ENCODE measurements at regions of chr12 and their contacts with region 1.

Region 1: GRCh38 chr12:117119592-117120198 is 20.5 kb upstream of the TESC start:
- DNase-seq: no peak
- H3K4me3 ChIP-seq: no peak overlapping the region
- H3K27ac ChIP-seq: no peak overlapping the region
- H3K4me1 ChIP-seq: peaks cover 0 to 13% (median 0%) of the 10 kb centered on the region in 3 donors
- H3K27me3 ChIP-seq: no peaks in the 10 kb centered on the region
- CTCF ChIP-seq: peak; percentile 47 to 68 (median 64)
- POLR2A ChIP-seq: no peak

Region 2: GRCh38 chr12:116703214-116703795 is 416.4 kb before region 1 on chr12:
- intact Hi-C with region 1: loop called (anchors 10 kb)
- DNase-seq: no peak
- H3K4me3 ChIP-seq: no peak overlapping the region
- H3K27ac ChIP-seq: no peak overlapping the region
- H3K4me1 ChIP-seq: peaks cover 0 to 7% (median 4%) of the 10 kb centered on the region in 3 donors
- H3K27me3 ChIP-seq: peaks cover 0 to 7% (median 0%) of the 10 kb centered on the region in 4 donors
- CTCF ChIP-seq: peak; percentile 81 to 93 (median 90)
- POLR2A ChIP-seq: no peak

Region 3: DNA sequence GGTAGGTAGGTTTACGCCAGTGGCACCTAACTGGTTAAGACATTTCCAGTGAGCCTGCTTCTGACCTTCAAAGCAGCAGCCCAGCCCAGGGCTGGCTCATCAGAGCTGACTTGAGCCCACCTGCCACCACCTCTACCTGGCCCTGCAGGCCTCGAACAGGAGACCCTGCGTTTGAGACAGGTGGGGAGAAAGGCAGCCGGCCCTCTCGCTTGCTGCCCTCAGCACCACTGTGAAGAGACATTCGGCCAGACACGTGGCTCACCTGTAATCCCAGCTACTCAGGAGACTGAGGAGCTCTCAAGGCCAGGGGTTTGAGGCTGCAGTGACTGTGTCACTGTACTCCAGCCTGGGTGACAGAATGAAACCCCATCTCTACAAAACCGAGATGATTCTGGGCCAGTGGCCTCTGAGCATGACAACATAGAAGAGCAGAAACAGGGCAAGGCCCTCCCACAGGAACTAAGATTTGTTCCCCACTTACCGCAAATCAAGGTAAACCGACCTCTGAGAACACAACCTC is 94.7 kb before region 1 on chr12:
- intact Hi-C with region 1: loop called (anchors 5 kb)
- DNase-seq: no peak
- H3K4me3 ChIP-seq: no peak overlapping the region
- H3K27ac ChIP-seq: no peak overlapping the region
- H3K4me1 ChIP-seq: peaks cover 0 to 9% (median 4%) of the 10 kb centered on the region in 3 donors
- H3K27me3 ChIP-seq: no peaks in the 10 kb centered on the region
- CTCF ChIP-seq: no peak
- POLR2A ChIP-seq: no peak

Region 4: DNA sequence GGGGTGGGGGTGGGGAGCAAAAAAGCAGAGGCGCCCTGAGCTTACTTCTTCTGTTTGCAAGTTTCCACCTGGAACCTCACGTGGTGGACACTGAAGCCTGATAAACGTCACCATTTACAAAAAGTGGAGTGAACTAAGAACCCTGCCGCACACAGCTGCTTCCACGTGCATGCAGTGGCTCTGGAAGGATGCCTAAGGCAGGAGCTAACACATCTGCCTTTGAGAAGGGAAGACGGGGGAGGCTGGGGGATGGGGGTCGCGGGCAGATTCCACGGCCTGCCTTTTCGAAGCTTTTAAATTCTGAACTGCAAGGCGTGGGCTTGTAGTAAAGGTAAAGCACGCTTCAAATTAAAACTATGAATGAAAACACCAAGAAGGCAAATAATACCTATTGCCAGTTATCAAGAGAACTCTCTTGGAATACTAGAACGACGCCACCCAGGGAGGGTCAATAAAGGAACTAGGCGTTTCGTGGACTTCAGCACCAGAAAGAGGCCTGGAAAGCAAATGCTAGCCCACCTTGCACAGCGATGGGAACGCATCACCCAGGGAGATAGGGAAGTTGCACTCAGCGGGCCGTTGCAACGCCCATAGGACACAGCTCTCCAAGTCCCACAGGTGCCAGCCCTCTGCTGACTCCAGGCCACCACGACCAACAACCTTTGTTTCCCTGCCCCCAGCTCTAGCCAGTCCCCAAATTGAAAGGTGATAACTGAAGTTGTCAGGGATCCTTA is 82.2 kb before region 1 on chr12:
- intact Hi-C with region 1: no loop called
- DNase-seq: no peak
- H3K4me3 ChIP-seq: no peak overlapping the region
- H3K27ac ChIP-seq: no peak overlapping the region
- H3K4me1 ChIP-seq: peaks cover 0 to 14% (median 8%) of the 10 kb centered on the region in 3 donors
- H3K27me3 ChIP-seq: peaks cover 0 to 57% (median 0%) of the 10 kb centered on the region in 4 donors
- CTCF ChIP-seq: no peak
- POLR2A ChIP-seq: no peak